ENCODE measurements at regions of chr20 and their contacts with region 1.

Region 1: DNA sequence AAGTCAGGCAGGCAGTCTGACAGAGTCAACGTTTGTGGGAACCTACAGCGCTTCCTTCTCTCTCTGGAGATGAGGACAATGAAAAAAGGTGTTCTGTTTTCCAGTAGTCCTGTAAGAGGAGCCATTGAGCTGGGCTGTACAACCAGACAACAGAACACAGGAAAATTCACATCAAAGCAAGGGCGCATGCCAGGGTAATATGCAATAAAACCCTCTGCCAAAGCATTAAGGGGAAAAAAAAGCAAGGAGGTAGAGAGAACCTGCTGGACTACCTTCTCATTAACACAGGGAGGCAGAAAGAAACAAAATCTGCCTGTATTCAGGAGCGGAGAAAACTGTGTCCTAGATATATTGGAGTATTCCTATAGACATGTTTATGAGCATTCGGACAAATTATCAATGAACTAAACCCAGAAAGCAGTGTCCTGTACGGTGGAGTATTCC is 1.3 kb downstream of the RNF24 start:
- DNase-seq: peak; percentile 51
- H3K4me3 ChIP-seq: no peak overlapping the region
- H3K27ac ChIP-seq: no peak overlapping the region
- H3K4me1 ChIP-seq: peaks cover 9% of the 10 kb centered on the region
- H3K27me3 ChIP-seq: no peaks in the 10 kb centered on the region
- CTCF ChIP-seq: peak in 2 of 3 experiments; percentile 32 to 37
- POLR2A ChIP-seq: no peak

Region 2: GRCh38 chr20:3753098-3753980 is 260.7 kb before region 1 on chr20:
- intact Hi-C with region 1: no loop called
- DNase-seq: peak; percentile 83
- H3K4me3 ChIP-seq: no peak overlapping the region
- H3K27ac ChIP-seq: no peak overlapping the region
- H3K4me1 ChIP-seq: no peaks in the 10 kb centered on the region
- H3K27me3 ChIP-seq: no peaks in the 10 kb centered on the region
- CTCF ChIP-seq: peak; percentile 47 to 75 (median 66)
- POLR2A ChIP-seq: no peak

Region 3: GRCh38 chr20:3854462-3854871 is 159.6 kb before region 1 on chr20:
- intact Hi-C with region 1: no loop called
- DNase-seq: no peak
- H3K4me3 ChIP-seq: no peak overlapping the region
- H3K27ac ChIP-seq: no peak overlapping the region
- H3K4me1 ChIP-seq: no peaks in the 10 kb centered on the region
- H3K27me3 ChIP-seq: no peaks in the 10 kb centered on the region
- CTCF ChIP-seq: no peak
- POLR2A ChIP-seq: no peak

Region 4: DNA sequence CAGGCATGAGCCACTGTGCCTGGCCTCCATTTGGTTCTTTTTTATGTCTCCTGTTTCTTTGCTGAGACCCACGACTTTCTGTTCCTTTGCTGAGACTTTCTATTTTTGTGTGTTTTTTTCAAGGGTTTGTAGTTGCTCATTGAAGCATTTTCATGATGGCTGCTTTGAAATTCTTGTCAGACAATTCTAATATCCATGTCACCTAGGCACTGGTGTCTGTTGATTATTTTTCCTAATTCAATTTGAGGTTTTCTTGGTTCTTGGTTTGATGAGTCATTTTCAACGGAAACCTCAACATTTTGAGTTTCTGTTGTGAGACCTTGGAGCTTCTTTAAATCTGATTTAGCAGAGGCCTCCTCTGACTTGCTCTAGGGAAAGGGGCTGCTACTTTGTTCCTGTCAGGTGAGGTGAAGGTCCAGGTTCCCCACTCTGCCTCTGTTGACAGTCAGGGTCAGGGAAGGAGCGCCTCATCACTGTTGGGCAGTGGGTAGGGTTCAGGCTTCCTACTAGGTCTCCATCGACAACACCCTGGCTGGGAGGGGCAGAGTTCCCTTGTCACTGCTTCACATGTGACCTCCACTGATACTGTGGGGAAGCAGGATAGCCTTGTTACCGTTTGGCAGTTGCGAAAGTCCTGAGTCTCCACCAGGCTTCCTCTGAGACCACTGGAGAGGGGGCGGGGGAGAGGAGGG is 68.5 kb after region 1 on chr20:
- intact Hi-C with region 1: loop called (anchors 10 kb)
- DNase-seq: peak; percentile 29
- H3K4me3 ChIP-seq: no peak overlapping the region
- H3K27ac ChIP-seq: no peak overlapping the region
- H3K4me1 ChIP-seq: peaks cover 5% of the 10 kb centered on the region
- H3K27me3 ChIP-seq: no peaks in the 10 kb centered on the region
- CTCF ChIP-seq: no peak
- POLR2A ChIP-seq: no peak